ENCODE measurements at regions of chr20 and their contacts with region 1.

Region 1: DNA sequence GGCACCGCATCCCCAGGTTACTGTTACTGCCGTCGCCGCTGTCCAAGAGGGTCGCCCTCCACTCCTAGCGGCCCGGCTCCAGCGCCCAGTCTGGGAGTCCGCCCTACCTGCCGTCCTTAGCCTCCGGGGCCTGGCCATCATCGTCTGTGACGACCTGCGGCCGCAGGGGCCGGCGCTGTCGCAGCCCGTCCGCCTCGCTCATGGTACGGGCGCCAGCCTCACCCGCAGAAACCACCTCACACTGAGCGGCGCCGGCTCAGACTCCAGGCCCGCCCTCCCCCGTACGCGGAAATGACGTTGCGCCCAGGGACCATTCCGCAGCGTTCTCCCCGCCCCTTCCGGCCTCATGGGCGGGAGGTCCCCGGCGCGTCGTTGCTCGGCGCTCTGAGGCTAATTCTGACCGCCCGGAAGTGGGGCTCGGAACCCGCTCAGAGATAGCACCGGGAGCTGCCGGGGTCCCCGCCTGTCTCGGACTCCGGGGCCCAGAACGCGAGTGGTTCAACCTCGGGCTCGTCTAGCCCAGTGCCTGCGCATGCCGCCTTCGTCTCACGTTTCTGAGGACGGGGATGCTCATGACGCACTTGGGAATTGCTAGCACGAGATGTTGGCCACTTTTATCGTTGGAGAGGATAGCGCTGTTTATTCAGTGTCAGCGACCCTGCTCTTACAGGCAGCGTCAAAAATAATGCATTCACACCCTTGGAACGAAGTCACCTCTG is at the start of gene APMAP:
- DNase-seq: peak; percentile 95
- H3K4me3 Mint-ChIP-seq: peak within 1 kb of the TSS; percentile 99
- H3K27ac Mint-ChIP-seq: peak within 1 kb of the TSS; percentile 94
- H3K4me1 Mint-ChIP-seq: peaks cover 52% of the 10 kb centered on the region
- H3K27me3 Mint-ChIP-seq: peaks cover 10% of the 10 kb centered on the region
- total RNA-seq, gene APMAP: 57.7 and 58.7 TPM in 2 replicates

Region 2: GRCh38 chr20:24934101-24934661 is 58.5 kb before region 1 on chr20:
- intact Hi-C with region 1: loop called (anchors 5 kb)
- DNase-seq: no peak
- H3K4me3 Mint-ChIP-seq: no peak overlapping the region
- H3K27ac Mint-ChIP-seq: no peak overlapping the region
- H3K4me1 Mint-ChIP-seq: peaks cover 46% of the 10 kb centered on the region
- H3K27me3 Mint-ChIP-seq: no peaks in the 10 kb centered on the region

Region 3: DNA sequence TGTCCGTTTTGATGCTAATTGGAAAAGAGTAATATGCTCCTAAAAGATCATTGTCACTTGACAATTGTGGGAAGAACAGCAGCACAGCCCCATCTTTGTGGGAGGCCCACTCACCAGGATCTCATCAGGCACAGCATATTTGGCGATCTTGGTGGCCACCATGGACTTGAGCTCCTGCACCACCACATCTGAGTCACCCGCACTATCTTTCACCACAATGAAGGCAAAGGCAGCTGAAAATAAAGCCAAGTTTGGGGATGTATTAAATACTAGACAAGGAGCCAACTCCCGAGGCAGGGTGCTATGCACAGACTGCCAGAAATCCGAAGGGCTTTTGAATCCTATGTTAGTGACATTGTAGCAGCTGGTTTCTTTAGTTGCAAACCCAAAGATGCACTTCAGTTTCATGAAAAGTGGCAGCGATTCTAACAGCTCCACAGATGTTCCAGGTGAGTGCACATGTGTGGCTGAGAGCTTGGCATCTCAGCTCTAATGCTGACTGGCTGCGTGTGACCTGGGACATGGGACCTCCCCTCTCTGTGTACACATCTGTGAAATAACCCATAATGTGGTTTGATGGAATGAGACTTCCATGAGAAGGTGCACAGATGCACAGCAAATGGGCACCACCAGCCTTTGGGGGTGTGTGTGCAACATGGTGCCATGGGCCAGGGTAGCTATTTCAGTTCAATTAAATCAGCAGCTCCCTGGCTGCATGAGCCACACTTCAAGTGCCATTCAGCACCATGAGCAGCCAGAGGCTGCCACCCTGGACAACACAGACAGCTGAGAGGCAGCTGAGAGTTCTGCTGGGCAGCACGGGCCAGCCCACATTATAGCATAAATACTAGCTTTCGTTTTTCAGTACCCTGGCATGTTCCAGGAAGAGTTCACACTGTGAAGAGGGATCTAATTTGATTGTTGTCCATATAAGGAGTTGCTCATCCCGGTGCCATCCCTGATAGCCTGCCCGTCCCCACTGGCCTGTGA is 16.8 kb after region 1 on chr20:
- intact Hi-C with region 1: no loop called
- DNase-seq: no peak
- H3K4me3 Mint-ChIP-seq: no peak overlapping the region
- H3K27ac Mint-ChIP-seq: no peak overlapping the region
- H3K4me1 Mint-ChIP-seq: no peaks in the 10 kb centered on the region
- H3K27me3 Mint-ChIP-seq: no peaks in the 10 kb centered on the region

Region 4: DNA sequence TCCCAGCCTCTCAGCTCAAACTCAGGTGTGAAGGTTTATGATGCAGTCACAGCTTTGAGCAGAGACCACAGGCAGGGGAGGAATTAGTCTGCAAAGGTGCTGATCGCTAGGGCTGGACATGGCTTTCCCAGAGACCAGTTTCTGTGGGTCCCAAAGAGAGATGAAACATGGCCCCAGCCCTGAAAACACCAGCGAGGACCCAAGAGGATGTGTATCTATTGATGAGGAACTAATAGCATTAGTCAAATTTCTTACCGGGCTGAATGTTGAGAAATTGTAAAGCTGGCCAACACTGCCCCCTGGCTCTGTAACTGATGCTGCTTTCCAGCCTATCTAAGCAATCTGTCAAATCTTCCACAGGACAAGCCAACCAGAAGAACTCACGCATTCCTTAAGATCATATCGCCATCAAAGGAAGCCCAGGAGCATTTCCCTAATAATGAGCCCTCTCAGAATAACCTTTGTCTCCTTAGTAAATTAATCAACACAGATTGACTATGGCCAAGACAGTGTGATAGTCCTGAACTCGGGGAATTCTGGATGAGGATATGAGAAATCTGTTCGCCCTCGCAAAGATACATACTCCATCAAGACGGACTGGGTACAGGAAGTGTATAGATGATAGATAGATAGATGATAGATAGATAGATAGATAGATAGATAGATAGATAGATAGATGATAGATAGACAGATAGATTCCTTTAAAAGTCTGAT is 73.1 kb after region 1 on chr20:
- intact Hi-C with region 1: loop called (anchors 1 kb)
- DNase-seq: peak; percentile 21
- H3K4me3 Mint-ChIP-seq: no peak overlapping the region
- H3K27ac Mint-ChIP-seq: no peak overlapping the region
- H3K4me1 Mint-ChIP-seq: peaks cover 4% of the 10 kb centered on the region
- H3K27me3 Mint-ChIP-seq: peaks cover 53% of the 10 kb centered on the region

Region 5: DNA sequence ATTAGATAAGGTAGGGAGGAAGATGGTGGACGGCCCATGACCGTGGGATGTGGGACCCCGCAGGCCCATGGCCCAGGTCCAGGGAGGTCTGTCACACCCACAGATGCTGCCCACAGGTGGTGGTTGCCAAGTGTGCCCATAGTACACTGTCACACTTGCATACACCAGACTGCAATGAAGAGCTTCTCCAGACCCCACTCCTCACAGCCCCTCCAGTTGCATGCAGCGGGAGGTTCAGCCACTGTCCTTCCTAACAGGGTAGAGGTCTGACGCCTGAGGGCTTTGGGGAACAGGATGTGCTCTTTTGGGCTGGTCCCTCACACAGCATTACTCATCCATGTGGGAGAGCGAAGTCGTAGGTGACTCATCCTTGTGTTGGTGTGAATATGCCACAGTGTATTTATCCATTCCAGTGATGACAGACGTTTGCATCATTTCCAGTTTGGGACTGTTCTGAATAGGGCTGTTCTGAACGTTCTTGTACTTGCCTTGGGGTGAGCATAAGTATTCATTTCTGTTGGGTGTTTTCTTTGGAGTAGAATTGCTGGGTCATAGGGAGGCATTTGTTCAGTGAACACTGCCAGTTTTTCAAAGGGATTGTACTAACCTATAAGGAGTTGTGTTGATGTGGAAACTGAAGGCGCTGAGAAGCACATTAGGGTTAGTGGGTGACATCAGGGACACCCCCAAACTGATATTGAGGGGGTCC is 245.1 kb after region 1 on chr20:
- intact Hi-C with region 1: loop called (anchors 2 kb)
- DNase-seq: peak; percentile 42
- H3K4me3 Mint-ChIP-seq: peak overlapping the region; percentile 37
- H3K27ac Mint-ChIP-seq: peak overlapping the region; percentile 86
- H3K4me1 Mint-ChIP-seq: peaks cover 30% of the 10 kb centered on the region
- H3K27me3 Mint-ChIP-seq: peaks cover 7% of the 10 kb centered on the region

Region 6: GRCh38 chr20:25310268-25310920 is 317.7 kb after region 1 on chr20:
- intact Hi-C with region 1: loop called (anchors 2 kb)
- DNase-seq: peak; percentile 61
- H3K4me3 Mint-ChIP-seq: peak overlapping the region; percentile 81
- H3K27ac Mint-ChIP-seq: peak overlapping the region; percentile 98
- H3K4me1 Mint-ChIP-seq: peaks cover 46% of the 10 kb centered on the region
- H3K27me3 Mint-ChIP-seq: no peaks in the 10 kb centered on the region

Region 7: DNA sequence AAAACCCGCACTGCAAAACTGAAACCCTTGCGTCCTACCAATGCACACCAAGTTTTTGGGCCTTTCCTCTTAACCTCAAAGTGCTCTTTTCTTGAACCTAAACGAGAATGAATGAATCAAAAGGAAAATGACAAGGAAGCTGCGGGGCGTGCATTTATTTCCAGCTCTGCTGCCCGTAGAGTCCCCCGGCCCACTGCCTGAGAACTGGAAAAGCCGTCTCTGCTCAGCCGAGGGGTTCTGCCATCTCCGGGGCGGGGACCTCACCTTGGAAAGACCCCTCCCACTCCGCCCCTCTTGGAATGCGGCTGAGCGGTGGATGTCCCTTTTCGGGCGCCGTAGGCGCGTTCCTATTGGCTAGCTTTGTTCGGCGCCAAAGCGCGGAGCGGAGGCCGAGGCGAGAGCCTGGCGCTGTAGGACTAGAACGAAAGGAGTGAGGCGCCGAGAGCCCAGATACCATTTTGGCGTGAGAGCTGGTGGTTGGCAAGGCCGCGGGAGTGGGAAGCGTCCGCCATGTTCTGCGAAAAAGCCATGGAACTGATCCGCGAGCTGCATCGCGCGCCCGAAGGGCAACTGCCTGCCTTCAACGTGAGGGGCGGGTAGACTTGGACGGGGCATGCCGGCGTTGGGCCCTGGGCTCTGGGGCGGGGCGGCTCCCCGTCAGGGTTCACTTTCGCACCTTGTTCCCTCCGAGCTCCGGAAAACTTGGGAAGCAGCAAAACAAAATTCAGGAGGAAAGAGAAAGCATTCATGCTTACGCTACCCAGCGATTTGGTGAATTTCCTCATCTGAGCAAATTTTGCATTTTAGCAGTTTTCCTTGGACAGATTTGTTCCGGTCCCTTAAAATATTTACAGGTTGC is 414.9 kb after region 1 on chr20 and contains the start of gene GINS1:
- intact Hi-C with region 1: loop called (anchors 1 kb)
- DNase-seq: peak; percentile 85
- H3K4me3 Mint-ChIP-seq: peak within 1 kb of the TSS; percentile 86
- H3K27ac Mint-ChIP-seq: peak within 1 kb of the TSS; percentile 87
- H3K4me1 Mint-ChIP-seq: peaks cover 27% of the 10 kb centered on the region
- H3K27me3 Mint-ChIP-seq: no peaks in the 10 kb centered on the region
- total RNA-seq, gene GINS1: 39.6 and 40.1 TPM in 2 replicates

Measured in activated T-helper 1 cell treated with anti-CD3 and anti-CD28 coated beads, Interleukin-12 subunit alpha, Interleukin-12 subunit beta, Interleukin-2, Interleukin-4 antibody, amounts not matched to agents 30 ng/mL and 10 ng/mL and 1 ng/mL, durations not matched to agents 14 hours and 24 hours and 36 hours (primary cell).